Activated T-helper 1 cell treated with anti-CD3 and anti-CD28 coated beads, Interleukin-12 subunit alpha, Interleukin-12 subunit beta, Interleukin-2, Interleukin-4 antibody, amounts not matched to agents 30 ng/mL and 10 ng/mL and 1 ng/mL, durations not matched to agents 14 hours and 24 hours and 36 hours (primary cell): ENCODE measurements at regions of chr1 and their contacts with region 1.

Region 1: DNA sequence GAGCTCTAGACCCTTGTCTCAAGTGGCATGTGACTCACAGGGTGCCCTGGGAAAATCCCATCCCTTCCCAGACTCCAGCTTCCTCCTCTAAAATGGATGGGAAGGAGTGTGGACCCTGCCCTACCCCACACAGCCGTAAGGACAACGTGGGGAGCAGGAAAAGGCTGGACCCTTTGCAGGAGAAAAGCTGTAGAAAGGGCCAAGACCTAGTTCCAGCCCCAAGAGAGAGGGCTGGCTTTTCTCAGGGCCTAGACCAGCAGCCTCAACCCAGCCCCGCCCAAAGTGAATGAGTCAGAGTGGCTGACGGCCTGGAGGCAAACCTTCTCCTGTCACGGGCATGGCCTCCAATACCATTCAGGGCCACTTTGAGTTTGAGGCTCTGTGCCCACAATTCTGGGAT is 1.1 kb downstream of the LAMB3 start:
- DNase-seq: peak; percentile 70
- H3K4me3 Mint-ChIP-seq: peak overlapping the region; percentile 58
- H3K27ac Mint-ChIP-seq: peak overlapping the region; percentile 96
- H3K4me1 Mint-ChIP-seq: peaks cover 76% of the 10 kb centered on the region
- H3K27me3 Mint-ChIP-seq: no peaks in the 10 kb centered on the region

Region 2: GRCh38 chr1:209607102-209607794 is 43.9 kb before region 1 on chr1:
- intact Hi-C with region 1: loop called (anchors 2 kb)
- DNase-seq: peak; percentile 39
- H3K4me3 Mint-ChIP-seq: no peak overlapping the region
- H3K27ac Mint-ChIP-seq: peak overlapping the region; percentile 66
- H3K4me1 Mint-ChIP-seq: peaks cover 15% of the 10 kb centered on the region
- H3K27me3 Mint-ChIP-seq: no peaks in the 10 kb centered on the region